ENCODE measurements at regions of chr16 and their contacts with region 1.

Region 1: GRCh38 chr16:2340564-2341455 is at the start of gene ABCA3:
- DNase-seq: peak; percentile 88 to 99 (median 91)

Region 2: GRCh38 chr16:2404099-2404498 is 63.3 kb after region 1 on chr16:
- intact Hi-C with region 1: no loop called
- DNase-seq: no peak

Region 3: GRCh38 chr16:2429034-2429770 is 88.4 kb after region 1 on chr16 and contains the start of gene CCNF:
- intact Hi-C with region 1: loop called (anchors 1 kb)
- DNase-seq: peak; percentile 96 to 99 (median 98)

Region 4: GRCh38 chr16:2500918-2501750 is 160.3 kb after region 1 on chr16:
- intact Hi-C with region 1: loop called (anchors 1 kb)
- DNase-seq: peak; percentile 81 to 98 (median 88)

Measured in posterior cingulate gyrus (tissue), 11 donors.